ENCODE measurements at regions of chr9 and their contacts with region 1.

Region 1: GRCh38 chr9:69874301-69875060 is 53.9 kb downstream of the CFAP95 start:
- DNase-seq: no peak

Region 2: DNA sequence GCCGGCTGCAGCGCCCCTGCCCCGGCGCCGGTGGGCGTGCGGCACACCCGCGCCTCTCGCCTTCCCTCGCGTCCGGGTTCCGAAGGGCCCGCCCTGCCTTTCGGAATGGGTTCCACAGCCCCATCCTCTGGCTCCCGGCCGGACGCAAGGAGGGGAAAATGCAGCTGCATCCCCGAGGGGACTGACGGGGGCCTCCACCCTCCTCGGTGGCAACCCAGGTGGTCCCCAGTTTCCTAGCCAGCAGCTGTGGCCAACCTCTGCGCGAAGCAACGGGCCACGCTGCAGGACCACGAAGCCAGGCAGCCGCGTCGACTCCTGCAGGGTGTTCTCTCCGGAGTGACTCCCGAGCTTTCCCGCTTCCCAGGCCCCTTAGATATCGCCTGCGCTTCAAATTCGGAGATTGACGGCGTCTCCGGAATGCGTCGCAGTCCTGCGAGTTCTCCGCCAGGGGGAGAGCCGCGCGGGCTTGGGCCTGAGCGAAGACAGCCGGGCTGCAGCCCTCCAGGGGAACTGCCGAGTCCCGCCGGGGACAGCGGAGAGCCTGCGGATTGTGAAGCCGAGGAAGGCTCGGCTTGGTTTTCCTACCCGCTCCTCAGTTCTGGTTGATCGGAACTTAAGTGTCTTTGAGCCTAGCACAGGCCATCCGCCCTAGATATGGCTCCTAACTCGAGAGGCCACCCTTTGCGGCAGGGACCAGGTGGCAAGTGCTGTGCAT is 201.7 kb before region 1 on chr9:
- in situ Hi-C with region 1: loop called (anchors 25 kb)
- DNase-seq: peak; percentile 86

Region 3: GRCh38 chr9:70893580-70894122 is 1019.2 kb after region 1 on chr9:
- in situ Hi-C with region 1: no loop called
- DNase-seq: no peak

Measured in KBM-7 (cell line).